ENCODE measurements at regions of chr4 and their contacts with region 1.

Region 1: GRCh38 chr4:76758290-76758882 is 139.6 kb downstream of the SOWAHB start:
- DNase-seq: no peak
- ATAC-seq: peak; percentile 87
- H3K4me3 Mint-ChIP-seq: no peak overlapping the region
- H3K27ac Mint-ChIP-seq: peak overlapping the region; percentile 16
- H3K4me1 Mint-ChIP-seq: peaks cover 2% of the 10 kb centered on the region; the same call in 1 of the 2 replicates
- H3K27me3 Mint-ChIP-seq: no peaks in the 10 kb centered on the region
- CTCF ChIP-seq: peak; percentile 63

Region 2: GRCh38 chr4:76515975-76516843 is 242.2 kb before region 1 on chr4:
- CTCF ChIA-PET with region 1: interaction called, 11 read pairs
- POLR2A ChIA-PET with region 1: interaction called, 8 read pairs
- DNase-seq: no peak
- ATAC-seq: no peak
- H3K4me3 Mint-ChIP-seq: no peak overlapping the region
- H3K27ac Mint-ChIP-seq: no peak overlapping the region
- H3K4me1 Mint-ChIP-seq: peaks cover 27% of the 10 kb centered on the region
- H3K27me3 Mint-ChIP-seq: no peaks in the 10 kb centered on the region
- CTCF ChIP-seq: no peak

Region 3: DNA sequence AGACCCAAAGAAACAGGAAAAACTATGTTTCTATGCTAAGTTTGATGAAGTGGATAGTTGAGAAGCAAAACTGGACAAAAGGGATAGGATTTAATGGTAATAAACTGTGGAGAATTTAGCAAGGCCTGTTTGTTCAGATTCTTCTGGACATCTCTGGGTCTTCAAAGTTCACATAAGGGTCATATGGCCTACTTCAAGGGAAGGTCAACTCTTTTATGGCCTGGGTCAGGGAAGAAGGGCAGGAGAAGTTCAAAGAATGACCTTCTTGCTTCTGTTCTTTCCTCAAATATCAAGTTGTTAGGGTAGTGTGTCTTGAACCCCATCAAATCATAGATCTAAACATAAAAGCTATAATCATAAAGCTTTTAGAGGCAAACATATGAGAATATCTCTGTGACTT is 36.9 kb after region 1 on chr4:
- CTCF ChIA-PET with region 1: no interaction called
- POLR2A ChIA-PET with region 1: no interaction called
- DNase-seq: no peak
- ATAC-seq: no peak
- H3K4me3 Mint-ChIP-seq: no peak overlapping the region
- H3K27ac Mint-ChIP-seq: no peak overlapping the region
- H3K4me1 Mint-ChIP-seq: no peaks in the 10 kb centered on the region
- H3K27me3 Mint-ChIP-seq: no peaks in the 10 kb centered on the region
- CTCF ChIP-seq: no peak

Region 4: GRCh38 chr4:76811604-76812412 is 53.4 kb after region 1 on chr4:
- CTCF ChIA-PET with region 1: no interaction called
- POLR2A ChIA-PET with region 1: no interaction called
- DNase-seq: no peak
- ATAC-seq: peak; percentile 48; the same call in 1 of the 2 replicates
- H3K4me3 Mint-ChIP-seq: no peak overlapping the region
- H3K27ac Mint-ChIP-seq: 0 out of 2 replicates have a peak overlapping the region, but pooled peaks have one; percentile 58
- H3K4me1 Mint-ChIP-seq: peaks cover 14% of the 10 kb centered on the region
- H3K27me3 Mint-ChIP-seq: no peaks in the 10 kb centered on the region; the same call in 1 of the 2 replicates
- CTCF ChIP-seq: no peak

Measured in WTC11 (cell line).